A673 (cell line): ENCODE measurements at regions of chr12 and their contacts with region 1.

Region 1: DNA sequence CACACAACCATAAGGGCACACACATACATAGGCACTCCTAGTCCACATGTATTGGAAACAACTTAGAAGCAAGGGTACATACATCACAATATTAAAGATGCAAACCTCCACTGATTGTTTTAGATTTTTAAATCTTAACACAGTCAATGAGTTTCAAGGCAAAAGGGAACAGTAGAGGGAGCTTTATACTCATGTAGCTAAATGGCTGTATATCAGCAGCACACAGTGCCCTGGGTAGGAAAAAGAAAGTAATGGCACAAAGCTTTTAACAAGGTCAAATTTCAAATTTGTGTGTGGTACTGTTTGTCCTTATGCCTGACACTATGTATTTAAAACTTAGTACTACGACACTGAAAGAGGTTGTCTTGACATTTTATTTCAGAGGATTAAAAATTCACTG is 262.0 kb downstream of the MED13L start:
- DNase-seq: peak; percentile 65
- H3K4me3 ChIP-seq: no peak overlapping the region
- H3K27ac ChIP-seq: no peak overlapping the region
- H3K4me1 ChIP-seq: peaks cover 7% of the 10 kb centered on the region
- H3K27me3 ChIP-seq: no peaks in the 10 kb centered on the region
- CTCF ChIP-seq: peak; percentile 65

Region 2: GRCh38 chr12:116123451-116124258 is 108.1 kb after region 1 on chr12:
- CTCF ChIA-PET with region 1: no interaction called
- POLR2A ChIA-PET with region 1: no interaction called
- intact Hi-C with region 1: loop called (anchors 5 kb)
- DNase-seq: peak; percentile 96
- H3K4me3 ChIP-seq: peak overlapping the region; percentile 36
- H3K27ac ChIP-seq: peak overlapping the region; percentile 44
- H3K4me1 ChIP-seq: peaks cover 85% of the 10 kb centered on the region
- H3K27me3 ChIP-seq: no peaks in the 10 kb centered on the region
- CTCF ChIP-seq: no peak

Region 3: GRCh38 chr12:116236148-116236731 is 220.7 kb after region 1 on chr12:
- CTCF ChIA-PET with region 1: no interaction called
- POLR2A ChIA-PET with region 1: no interaction called
- intact Hi-C with region 1: loop called (anchors 2 kb)
- DNase-seq: peak; percentile 76
- H3K4me3 ChIP-seq: no peak overlapping the region
- H3K27ac ChIP-seq: no peak overlapping the region
- H3K4me1 ChIP-seq: peaks cover 34% of the 10 kb centered on the region
- H3K27me3 ChIP-seq: no peaks in the 10 kb centered on the region
- CTCF ChIP-seq: peak; percentile 87

Region 4: GRCh38 chr12:116295327-116296263 is 280.1 kb after region 1 on chr12:
- CTCF ChIA-PET with region 1: no interaction called
- POLR2A ChIA-PET with region 1: no interaction called
- intact Hi-C with region 1: no loop called
- DNase-seq: peak; percentile 28
- H3K4me3 ChIP-seq: no peak overlapping the region
- H3K27ac ChIP-seq: no peak overlapping the region
- H3K4me1 ChIP-seq: peaks cover 10% of the 10 kb centered on the region
- H3K27me3 ChIP-seq: no peaks in the 10 kb centered on the region
- CTCF ChIP-seq: no peak